PC-9 (cell line): ENCODE measurements at regions of chr20 and their contacts with region 1.

Region 1: DNA sequence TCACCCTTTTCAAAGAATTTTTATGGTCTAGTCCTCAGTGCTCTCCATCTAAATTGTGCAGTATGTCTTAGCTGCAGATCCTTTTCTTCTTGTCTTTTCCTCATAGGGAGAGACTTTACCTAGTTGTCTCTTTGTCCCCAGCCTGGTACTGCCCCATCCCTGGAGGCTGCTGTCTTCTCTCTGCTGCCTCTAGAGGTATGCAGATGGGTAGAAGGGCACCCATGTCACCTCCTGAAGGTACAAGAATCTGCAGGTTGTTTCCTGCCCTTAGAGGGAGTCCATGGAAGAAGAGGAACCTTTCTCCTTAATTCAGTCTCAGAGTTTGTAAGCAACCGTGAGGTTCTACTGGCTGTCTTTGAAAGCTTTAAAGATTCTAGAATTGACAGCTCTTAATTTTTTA is 39.1 kb downstream of the MCM8 start:
- DNase-seq: no peak
- H3K4me3 ChIP-seq: no peak overlapping the region
- H3K27ac ChIP-seq: no peak overlapping the region
- H3K4me1 ChIP-seq: no peaks in the 10 kb centered on the region
- H3K27me3 ChIP-seq: no peaks in the 10 kb centered on the region
- CTCF ChIP-seq: no peak

Region 2: GRCh38 chr20:5918856-5919625 is 70.5 kb before region 1 on chr20:
- CTCF ChIA-PET with region 1: no interaction called
- POLR2A ChIA-PET with region 1: no interaction called
- intact Hi-C with region 1: no loop called
- DNase-seq: peak in 1 of 2 experiments; percentile 50
- H3K4me3 ChIP-seq: no peak overlapping the region
- H3K27ac ChIP-seq: no peak overlapping the region
- H3K4me1 ChIP-seq: peaks cover 12% of the 10 kb centered on the region; the same call in 1 of the 2 replicates
- H3K27me3 ChIP-seq: peaks cover 25% of the 10 kb centered on the region
- CTCF ChIP-seq: no peak

Region 3: GRCh38 chr20:6026051-6026450 is 36.5 kb after region 1 on chr20:
- CTCF ChIA-PET with region 1: no interaction called
- POLR2A ChIA-PET with region 1: interaction called, 31 read pairs
- intact Hi-C with region 1: no loop called
- DNase-seq: no peak
- H3K4me3 ChIP-seq: no peak overlapping the region
- H3K27ac ChIP-seq: no peak overlapping the region
- H3K4me1 ChIP-seq: no peaks in the 10 kb centered on the region
- H3K27me3 ChIP-seq: no peaks in the 10 kb centered on the region
- CTCF ChIP-seq: no peak

Region 4: GRCh38 chr20:6122873-6123648 is 133.5 kb after region 1 on chr20 and contains the start of gene FERMT1:
- CTCF ChIA-PET with region 1: no interaction called
- POLR2A ChIA-PET with region 1: no interaction called
- intact Hi-C with region 1: no loop called
- DNase-seq: peak; percentile 77 to 91
- H3K4me3 ChIP-seq: peak within 1 kb of the TSS; percentile 84
- H3K27ac ChIP-seq: peak within 1 kb of the TSS; percentile 86
- H3K4me1 ChIP-seq: peaks cover 34% of the 10 kb centered on the region
- H3K27me3 ChIP-seq: no peaks in the 10 kb centered on the region
- CTCF ChIP-seq: no peak; the same call in 1 of the 2 replicates
- total RNA-seq, gene FERMT1: 18.2 and 20.6 TPM in 2 replicates